Ovary (tissue), 10 donors: ENCODE measurements at regions of chr11 and their contacts with region 1.

Region 1: GRCh38 chr11:125807909-125808308 is 20.0 kb downstream of the PATE3 start:
- DNase-seq: no peak
- H3K4me3 ChIP-seq: no peak overlapping the region
- H3K27ac ChIP-seq: no peak overlapping the region
- H3K4me1 ChIP-seq: no peaks in the 10 kb centered on the region
- H3K27me3 ChIP-seq: no peaks in the 10 kb centered on the region
- CTCF ChIP-seq: no peak
- EP300 ChIP-seq: no peak
- POLR2A ChIP-seq: no peak

Region 2: GRCh38 chr11:124167826-124168231 is 1640.1 kb before region 1 on chr11:
- intact Hi-C with region 1: loop called in 1 of 4 experiments (anchors 10 kb)
- DNase-seq: no peak
- H3K4me3 ChIP-seq: no peak overlapping the region
- H3K27ac ChIP-seq: no peak overlapping the region
- H3K4me1 ChIP-seq: no peaks in the 10 kb centered on the region
- H3K27me3 ChIP-seq: no peaks in the 10 kb centered on the region
- CTCF ChIP-seq: no peak
- EP300 ChIP-seq: no peak
- POLR2A ChIP-seq: no peak

Region 3: GRCh38 chr11:125164422-125165110 is 643.3 kb before region 1 on chr11 and contains the start of gene PKNOX2:
- intact Hi-C with region 1: no loop called
- DNase-seq: peak; percentile 87 to 92 (median 91)
- H3K4me3 ChIP-seq: peak within 1 kb of the TSS; percentile 62
- H3K27ac ChIP-seq: peak within 1 kb of the TSS; percentile 88 to 91
- H3K4me1 ChIP-seq: peaks cover 10% of the 10 kb centered on the region
- H3K27me3 ChIP-seq: no peaks in the 10 kb centered on the region
- CTCF ChIP-seq: peak; percentile 40 to 78 (median 53)
- EP300 ChIP-seq: no peak
- POLR2A ChIP-seq: peak; percentile 48
- total RNA-seq, gene PKNOX2: 11.8 to 42.3 (median 30.2) TPM

Region 4: GRCh38 chr11:125724125-125724524 is 83.8 kb before region 1 on chr11:
- intact Hi-C with region 1: no loop called
- DNase-seq: no peak
- H3K4me3 ChIP-seq: no peak overlapping the region
- H3K27ac ChIP-seq: no peak overlapping the region
- H3K4me1 ChIP-seq: no peaks in the 10 kb centered on the region
- H3K27me3 ChIP-seq: no peaks in the 10 kb centered on the region
- CTCF ChIP-seq: no peak
- EP300 ChIP-seq: no peak
- POLR2A ChIP-seq: no peak

Region 5: DNA sequence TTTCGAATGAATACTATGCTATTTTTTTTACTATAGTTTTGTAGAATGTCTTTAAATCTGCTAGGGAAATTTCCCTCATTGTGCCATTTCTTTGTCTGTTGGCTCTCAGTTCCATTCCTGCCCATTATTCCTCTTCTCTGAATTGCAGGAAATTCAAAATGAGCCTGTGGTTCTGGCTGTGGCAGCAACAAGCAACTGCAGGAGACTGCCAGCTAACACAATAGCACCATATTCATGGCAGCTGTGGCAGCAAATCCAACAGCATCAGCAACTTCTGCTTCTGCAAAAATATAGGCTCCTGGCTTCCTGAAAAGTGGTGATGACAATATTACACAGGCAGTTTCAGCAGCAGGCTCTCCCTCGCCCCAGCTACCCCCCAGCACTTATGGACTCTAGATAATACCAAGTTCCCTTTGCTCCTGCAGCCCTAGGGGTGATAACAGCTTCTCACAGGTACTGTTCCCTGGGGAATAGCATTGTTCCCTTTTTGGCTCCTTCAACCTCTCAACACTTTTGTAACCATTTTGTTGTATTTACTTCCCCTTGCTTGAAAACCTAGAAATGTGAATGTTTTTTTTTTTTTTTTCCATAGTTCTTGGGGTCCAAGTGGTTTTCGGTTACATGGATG is 34.5 kb after region 1 on chr11:
- intact Hi-C with region 1: no loop called
- DNase-seq: no peak
- H3K4me3 ChIP-seq: no peak overlapping the region
- H3K27ac ChIP-seq: no peak overlapping the region
- H3K4me1 ChIP-seq: no peaks in the 10 kb centered on the region
- H3K27me3 ChIP-seq: no peaks in the 10 kb centered on the region
- CTCF ChIP-seq: no peak
- EP300 ChIP-seq: no peak
- POLR2A ChIP-seq: no peak